ENCODE measurements at regions of chr10 and their contacts with region 1.

Region 1: GRCh38 chr10:27558612-27559020 is 54.5 kb downstream of the RAB18 start:
- DNase-seq: peak; percentile 22
- ATAC-seq: peak; percentile 70; the same call in 1 of the 2 replicates
- H3K4me3 ChIP-seq: no peak overlapping the region
- H3K27ac ChIP-seq: no peak overlapping the region
- H3K4me1 ChIP-seq: no peaks in the 10 kb centered on the region
- H3K27me3 ChIP-seq: no peaks in the 10 kb centered on the region
- CTCF ChIP-seq: peak; percentile 74

Region 2: GRCh38 chr10:27446091-27446918 is 112.3 kb before region 1 on chr10:
- CTCF ChIA-PET with region 1: no interaction called
- POLR2A ChIA-PET with region 1: no interaction called
- in situ Hi-C with region 1: no loop called
- intact Hi-C with region 1: loop called (anchors 5 kb)
- DNase-seq: no peak
- ATAC-seq: peak; percentile 48; the same call in 1 of the 2 replicates
- H3K4me3 ChIP-seq: no peak overlapping the region
- H3K27ac ChIP-seq: no peak overlapping the region
- H3K4me1 ChIP-seq: no peaks in the 10 kb centered on the region
- H3K27me3 ChIP-seq: no peaks in the 10 kb centered on the region
- CTCF ChIP-seq: peak; percentile 45; the same call in 1 of the 2 replicates